Cardiac septum (tissue), 1 donor: ENCODE measurements at regions of chr9 and their contacts with region 1.

Region 1: GRCh38 chr9:70639853-70640814 is 225.7 kb upstream of the KLF9 start:
- DNase-seq: no peak

Region 2: DNA sequence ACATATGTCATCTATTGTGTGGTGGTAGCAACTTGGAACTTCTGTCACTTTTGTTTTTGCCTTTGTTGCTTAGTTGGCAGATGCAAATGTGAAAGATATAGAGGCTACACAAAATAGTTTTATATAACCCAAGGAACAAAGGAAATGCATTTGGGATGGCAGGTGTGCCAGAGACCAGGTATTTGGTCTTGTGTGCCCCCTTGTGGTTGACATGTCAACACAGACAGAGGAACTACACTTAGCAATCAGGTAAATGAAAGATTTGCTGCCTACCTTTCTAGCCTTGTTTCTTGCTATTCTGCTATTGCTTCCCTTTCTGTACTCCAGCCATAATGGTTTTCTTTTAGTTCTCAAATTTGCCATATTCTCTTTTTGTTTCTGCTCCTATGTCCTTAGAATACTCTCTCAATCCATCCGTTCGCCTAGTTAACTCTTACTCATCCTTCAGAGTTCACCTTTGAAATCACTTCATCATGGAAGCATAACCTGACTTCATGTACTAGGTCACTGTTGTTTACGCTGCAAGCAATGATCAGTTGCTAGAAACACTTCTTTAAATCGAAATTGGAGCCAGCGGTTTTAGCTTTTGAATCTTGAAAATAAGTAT is 361.7 kb after region 1 on chr9:
- intact Hi-C with region 1: loop called (anchors 5 kb)
- DNase-seq: no peak

Region 3: GRCh38 chr9:71249729-71250317 is 609.7 kb after region 1 on chr9:
- intact Hi-C with region 1: loop called (anchors 5 kb)
- DNase-seq: no peak